MCF 10A (cell line): ENCODE measurements at regions of chr18 and their contacts with region 1.

Region 1: DNA sequence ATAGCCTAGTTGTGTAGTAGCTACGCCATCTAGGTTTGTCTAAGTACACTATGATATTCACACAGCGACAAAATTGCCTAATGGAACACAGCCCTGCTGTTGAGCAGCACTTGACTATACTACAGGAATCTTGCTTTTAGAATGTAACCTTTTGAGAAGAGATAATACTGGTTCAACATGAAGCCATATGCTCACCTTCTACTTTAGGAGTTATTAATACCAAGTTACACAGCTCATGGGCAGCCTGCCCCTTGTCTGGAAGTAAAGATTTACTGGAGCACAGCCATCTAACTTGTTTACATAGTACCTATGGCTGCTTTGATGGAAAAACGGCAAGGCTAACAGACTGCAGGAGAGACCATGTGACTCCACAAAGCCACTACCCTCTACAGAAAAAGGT is 174.8 kb downstream of the DYM start:
- DNase-seq: no peak
- H3K4me3 Mint-ChIP-seq: no peak overlapping the region
- H3K27ac Mint-ChIP-seq: no peak overlapping the region
- H3K4me1 Mint-ChIP-seq: no peaks in the 10 kb centered on the region
- H3K27me3 Mint-ChIP-seq: no peaks in the 10 kb centered on the region
- CTCF ChIP-seq: no peak

Region 2: GRCh38 chr18:48800876-48801727 is 484.5 kb before region 1 on chr18:
- CTCF ChIA-PET with region 1: no interaction called
- POLR2A ChIA-PET with region 1: no interaction called
- intact Hi-C with region 1: no loop called
- DNase-seq: no peak
- H3K4me3 Mint-ChIP-seq: no peak overlapping the region
- H3K27ac Mint-ChIP-seq: no peak overlapping the region
- H3K4me1 Mint-ChIP-seq: peaks cover 5% of the 10 kb centered on the region
- H3K27me3 Mint-ChIP-seq: no peaks in the 10 kb centered on the region
- CTCF ChIP-seq: no peak

Region 3: DNA sequence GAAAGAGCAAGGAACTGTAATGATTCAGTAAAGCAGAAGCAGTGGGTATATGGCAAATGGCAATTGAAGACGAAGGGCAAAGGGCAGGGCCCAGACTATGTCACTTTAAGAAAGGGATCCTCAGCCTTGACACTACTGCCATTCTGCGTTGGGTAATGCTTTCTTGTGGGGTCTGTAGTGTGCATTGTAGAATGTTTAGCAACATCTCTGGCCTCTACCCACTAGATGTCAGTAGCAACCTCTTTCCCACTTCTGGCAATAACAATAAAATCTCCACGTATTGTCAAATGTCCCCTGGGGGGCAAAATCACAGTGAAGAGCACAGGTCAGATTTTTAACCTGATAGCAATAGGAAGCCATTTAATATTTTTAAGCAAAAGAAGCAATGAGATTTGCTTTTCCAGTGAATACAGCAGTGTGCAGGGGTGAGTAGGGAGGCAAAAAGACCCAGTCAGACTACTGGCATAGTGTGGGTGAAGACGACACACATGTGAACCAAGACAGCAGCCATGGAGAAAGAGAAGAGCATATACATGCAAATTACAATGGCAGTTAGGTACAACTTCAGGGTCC is 34.7 kb before region 1 on chr18:
- CTCF ChIA-PET with region 1: no interaction called
- POLR2A ChIA-PET with region 1: no interaction called
- intact Hi-C with region 1: loop called (anchors 2 kb)
- DNase-seq: peak; percentile 14
- H3K4me3 Mint-ChIP-seq: no peak overlapping the region
- H3K27ac Mint-ChIP-seq: no peak overlapping the region
- H3K4me1 Mint-ChIP-seq: peaks cover 17% of the 10 kb centered on the region
- H3K27me3 Mint-ChIP-seq: no peaks in the 10 kb centered on the region
- CTCF ChIP-seq: peak; percentile 41